ENCODE measurements at regions of chr2 and their contacts with region 1.

Region 1: DNA sequence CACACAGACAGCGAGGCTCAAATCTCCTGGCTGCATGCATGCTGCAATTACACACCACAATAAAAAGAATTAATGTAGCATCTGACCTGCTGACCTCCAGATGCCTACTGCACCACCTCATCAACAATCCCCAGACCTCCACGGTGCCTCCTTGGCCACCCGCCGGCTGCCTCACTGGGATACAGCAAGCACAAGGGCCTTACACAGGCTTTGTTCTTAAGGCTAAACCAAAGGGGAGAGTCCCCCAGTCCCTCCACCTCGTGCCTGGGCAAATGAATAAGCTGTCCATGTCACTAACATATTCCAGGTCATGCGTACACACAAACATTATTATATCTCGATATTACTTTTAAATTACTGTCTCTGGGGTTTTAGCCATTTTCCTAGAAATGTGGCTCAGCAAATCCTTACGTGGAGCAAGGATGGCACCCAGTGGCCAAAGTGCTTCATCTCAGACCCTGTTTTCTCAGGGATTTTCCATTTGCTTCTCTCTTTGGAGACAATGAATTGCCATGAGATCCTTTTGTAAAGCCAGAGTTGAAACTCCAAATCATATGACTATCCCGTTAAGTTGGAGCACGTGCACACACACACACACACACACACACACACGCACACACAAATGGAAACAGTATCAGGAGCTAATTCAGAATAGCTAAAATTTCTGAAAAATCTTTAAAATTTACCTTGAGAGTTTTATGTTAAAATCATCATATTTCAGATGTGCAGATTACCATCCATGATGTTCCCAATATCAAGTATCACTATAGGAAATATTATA is 313.8 kb downstream of the PDE11A start:
- DNase-seq: peak; percentile 59
- ATAC-seq: peak; percentile 23; the same call in 1 of the 2 replicates
- H3K4me3 ChIP-seq: no peak overlapping the region
- H3K27ac ChIP-seq: no peak overlapping the region
- H3K4me1 ChIP-seq: no peaks in the 10 kb centered on the region
- H3K27me3 ChIP-seq: peaks cover 26% of the 10 kb centered on the region; the same call in 1 of the 2 replicates
- CTCF ChIP-seq: peak; percentile 68

Region 2: GRCh38 chr2:177029480-177029879 is 729.3 kb before region 1 on chr2:
- CTCF ChIA-PET with region 1: no interaction called
- POLR2A ChIA-PET with region 1: no interaction called
- intact Hi-C with region 1: no loop called
- DNase-seq: peak; percentile 48
- ATAC-seq: peak; percentile 56
- H3K4me3 ChIP-seq: no peak overlapping the region
- H3K27ac ChIP-seq: no peak overlapping the region
- H3K4me1 ChIP-seq: no peaks in the 10 kb centered on the region
- H3K27me3 ChIP-seq: peaks cover 56% of the 10 kb centered on the region
- CTCF ChIP-seq: peak; percentile 66

Region 3: DNA sequence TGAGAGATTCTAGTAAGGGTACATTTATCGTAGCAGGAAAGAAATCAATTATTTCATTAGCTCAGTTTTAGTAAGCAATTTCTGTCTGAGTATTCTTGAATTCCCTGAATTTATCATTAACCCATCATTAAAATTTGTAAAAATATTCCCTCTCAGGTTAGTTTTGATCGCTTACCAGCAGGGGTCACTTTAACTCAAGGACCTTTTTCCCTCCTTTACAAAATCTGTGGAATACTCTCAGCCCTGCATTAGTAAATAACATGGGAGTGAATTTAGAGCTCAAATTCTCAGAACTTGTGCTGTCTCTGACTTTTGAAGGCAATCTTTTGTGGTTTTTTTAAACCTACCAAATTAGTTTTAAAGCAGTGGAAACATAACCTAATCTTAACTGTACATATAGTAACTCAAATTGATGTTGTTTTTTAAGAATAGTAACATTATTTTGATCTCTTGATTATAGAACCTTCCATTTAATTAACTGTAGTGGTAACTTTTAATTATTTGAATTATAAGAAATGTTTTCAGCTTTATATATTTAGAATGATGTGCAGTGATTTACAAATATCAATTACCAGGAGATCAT is 269.0 kb before region 1 on chr2:
- CTCF ChIA-PET with region 1: no interaction called
- POLR2A ChIA-PET with region 1: no interaction called
- intact Hi-C with region 1: loop called (anchors 1 kb)
- DNase-seq: peak; percentile 56
- ATAC-seq: peak; percentile 49
- H3K4me3 ChIP-seq: no peak overlapping the region
- H3K27ac ChIP-seq: no peak overlapping the region
- H3K4me1 ChIP-seq: no peaks in the 10 kb centered on the region
- H3K27me3 ChIP-seq: no peaks in the 10 kb centered on the region
- CTCF ChIP-seq: peak; percentile 85

Region 4: GRCh38 chr2:177618255-177619253 is 140.2 kb before region 1 on chr2:
- CTCF ChIA-PET with region 1: no interaction called
- POLR2A ChIA-PET with region 1: no interaction called
- intact Hi-C with region 1: loop called (anchors 5 kb)
- DNase-seq: peak; percentile 83
- ATAC-seq: peak; percentile 94
- H3K4me3 ChIP-seq: peak overlapping the region; percentile 82
- H3K27ac ChIP-seq: peak overlapping the region; percentile 86
- H3K4me1 ChIP-seq: 0 out of 2 replicates have a peak, but pooled peaks cover 5% of the 10 kb centered on the region
- H3K27me3 ChIP-seq: no peaks in the 10 kb centered on the region
- CTCF ChIP-seq: no peak

Region 5: GRCh38 chr2:177717831-177718618 is 40.8 kb before region 1 on chr2:
- CTCF ChIA-PET with region 1: no interaction called
- POLR2A ChIA-PET with region 1: no interaction called
- intact Hi-C with region 1: loop called (anchors 2 kb)
- DNase-seq: peak; percentile 39
- ATAC-seq: no peak
- H3K4me3 ChIP-seq: no peak overlapping the region
- H3K27ac ChIP-seq: no peak overlapping the region
- H3K4me1 ChIP-seq: no peaks in the 10 kb centered on the region
- H3K27me3 ChIP-seq: peaks cover 59% of the 10 kb centered on the region
- CTCF ChIP-seq: peak; percentile 53

Region 6: GRCh38 chr2:177783835-177784744 is 25.3 kb after region 1 on chr2:
- CTCF ChIA-PET with region 1: no interaction called
- POLR2A ChIA-PET with region 1: no interaction called
- intact Hi-C with region 1: no loop called
- DNase-seq: peak; percentile 84
- ATAC-seq: peak; percentile 85
- H3K4me3 ChIP-seq: peak overlapping the region; percentile 33
- H3K27ac ChIP-seq: no peak overlapping the region
- H3K4me1 ChIP-seq: peaks cover 31% of the 10 kb centered on the region
- H3K27me3 ChIP-seq: no peaks in the 10 kb centered on the region
- CTCF ChIP-seq: no peak